ENCODE measurements at regions of chr9 and their contacts with region 1.

Region 1: DNA sequence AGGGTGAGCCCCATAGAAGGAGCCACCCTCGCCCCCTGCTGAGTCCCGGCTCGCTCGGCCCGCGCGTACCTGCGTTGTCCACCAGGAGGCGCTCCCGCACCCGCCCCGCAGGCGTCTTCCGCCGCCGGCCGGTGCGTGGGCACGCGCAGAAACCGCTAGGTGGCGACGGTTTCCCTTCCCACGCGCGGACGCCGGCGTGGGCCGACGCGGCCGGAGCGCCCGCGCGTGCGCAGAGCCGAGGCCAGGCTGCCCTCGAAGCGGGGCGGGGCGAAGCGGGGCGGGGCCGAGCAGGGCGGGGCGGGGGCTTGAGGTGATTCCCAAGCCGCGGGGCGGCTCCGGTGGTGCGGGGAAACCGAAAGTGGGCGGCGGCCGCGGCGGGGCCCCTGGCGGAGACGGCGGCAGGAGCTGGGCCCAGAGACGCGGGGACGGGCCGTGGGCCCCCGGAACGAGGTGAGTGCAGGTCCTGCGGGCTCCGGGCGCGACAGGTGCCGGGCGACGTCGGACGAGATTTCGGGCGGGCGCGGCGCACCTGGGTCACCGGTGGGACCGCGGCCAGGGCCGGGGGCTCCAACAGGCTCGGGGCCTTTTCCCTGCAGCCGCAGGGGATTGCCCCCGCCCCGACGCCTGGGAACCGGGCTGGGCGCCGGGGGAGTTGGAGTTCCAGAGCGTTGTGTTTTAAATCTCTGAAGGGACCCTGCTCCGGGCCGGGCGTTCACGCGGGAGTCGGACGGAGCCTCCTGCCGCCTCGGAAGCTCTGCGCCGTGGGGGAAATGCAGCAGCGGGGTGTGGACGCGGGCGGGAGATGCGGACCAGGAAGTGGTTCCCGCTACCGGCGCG is at the start of gene TDRD7:
- DNase-seq: peak; percentile 94
- ATAC-seq: peak; percentile 90
- H3K4me3 Mint-ChIP-seq: peak within 1 kb of the TSS; percentile 87
- H3K27ac Mint-ChIP-seq: peak within 1 kb of the TSS; percentile 78
- H3K4me1 Mint-ChIP-seq: peaks cover 38% of the 10 kb centered on the region
- H3K27me3 Mint-ChIP-seq: peaks cover 5% of the 10 kb centered on the region
- CTCF ChIP-seq: peak; percentile 43
- total RNA-seq, gene TDRD7: 13.7 and 14.7 TPM in 2 replicates

Region 2: DNA sequence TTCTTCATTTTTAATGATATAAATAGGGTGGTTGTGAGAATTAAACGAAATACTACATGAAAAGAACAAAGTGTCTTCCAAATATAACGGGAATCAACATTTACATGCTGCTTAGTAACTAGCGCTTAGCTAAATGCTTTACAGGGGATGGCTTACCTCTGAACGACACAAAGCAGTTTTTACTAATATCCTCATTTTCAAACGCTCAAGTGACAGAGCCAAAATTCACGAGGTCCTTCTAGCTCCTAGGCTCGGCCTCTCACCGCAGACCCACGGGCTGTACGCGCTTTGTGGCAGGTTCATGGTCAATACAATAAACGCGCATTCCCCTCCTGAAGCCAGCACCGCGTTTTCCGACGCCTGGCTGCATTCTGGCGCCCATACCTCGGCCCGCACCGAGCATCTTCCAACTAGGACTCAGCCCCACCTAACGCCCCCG is 634.6 kb before region 1 on chr9:
- CTCF ChIA-PET with region 1: no interaction called
- POLR2A ChIA-PET with region 1: no interaction called
- intact Hi-C with region 1: loop called (anchors 5 kb)
- DNase-seq: no peak
- ATAC-seq: no peak
- H3K4me3 Mint-ChIP-seq: peak overlapping the region; percentile 99
- H3K27ac Mint-ChIP-seq: peak overlapping the region; percentile 96
- H3K4me1 Mint-ChIP-seq: peaks cover 25% of the 10 kb centered on the region
- H3K27me3 Mint-ChIP-seq: no peaks in the 10 kb centered on the region
- CTCF ChIP-seq: no peak

Region 3: GRCh38 chr9:97237951-97238851 is 173.8 kb before region 1 on chr9:
- CTCF ChIA-PET with region 1: no interaction called
- POLR2A ChIA-PET with region 1: no interaction called
- intact Hi-C with region 1: loop called (anchors 5 kb)
- DNase-seq: peak; percentile 62
- ATAC-seq: peak; percentile 92
- H3K4me3 Mint-ChIP-seq: peak overlapping the region; percentile 95
- H3K27ac Mint-ChIP-seq: peak overlapping the region; percentile 90
- H3K4me1 Mint-ChIP-seq: peaks cover 18% of the 10 kb centered on the region
- H3K27me3 Mint-ChIP-seq: peaks cover 2% of the 10 kb centered on the region
- CTCF ChIP-seq: no peak

Region 4: GRCh38 chr9:97348866-97349265 is 63.1 kb before region 1 on chr9:
- CTCF ChIA-PET with region 1: no interaction called
- POLR2A ChIA-PET with region 1: no interaction called
- intact Hi-C with region 1: no loop called
- DNase-seq: no peak
- ATAC-seq: no peak
- H3K4me3 Mint-ChIP-seq: no peak overlapping the region
- H3K27ac Mint-ChIP-seq: no peak overlapping the region
- H3K4me1 Mint-ChIP-seq: no peaks in the 10 kb centered on the region
- H3K27me3 Mint-ChIP-seq: no peaks in the 10 kb centered on the region
- CTCF ChIP-seq: no peak

Region 5: GRCh38 chr9:97501177-97501971 is 89.4 kb after region 1 on chr9 and contains the start of gene TMOD1:
- CTCF ChIA-PET with region 1: interaction called, 5 read pairs
- POLR2A ChIA-PET with region 1: no interaction called
- intact Hi-C with region 1: loop called (anchors 1 kb)
- DNase-seq: peak; percentile 48
- ATAC-seq: peak; percentile 88
- H3K4me3 Mint-ChIP-seq: peak within 1 kb of the TSS; percentile 77
- H3K27ac Mint-ChIP-seq: no peak within 1 kb of the TSS
- H3K4me1 Mint-ChIP-seq: peaks cover 21% of the 10 kb centered on the region
- H3K27me3 Mint-ChIP-seq: peaks cover 29% of the 10 kb centered on the region
- CTCF ChIP-seq: no peak
- total RNA-seq, gene TMOD1: 1.2 and 1.9 TPM in 2 replicates

Region 6: DNA sequence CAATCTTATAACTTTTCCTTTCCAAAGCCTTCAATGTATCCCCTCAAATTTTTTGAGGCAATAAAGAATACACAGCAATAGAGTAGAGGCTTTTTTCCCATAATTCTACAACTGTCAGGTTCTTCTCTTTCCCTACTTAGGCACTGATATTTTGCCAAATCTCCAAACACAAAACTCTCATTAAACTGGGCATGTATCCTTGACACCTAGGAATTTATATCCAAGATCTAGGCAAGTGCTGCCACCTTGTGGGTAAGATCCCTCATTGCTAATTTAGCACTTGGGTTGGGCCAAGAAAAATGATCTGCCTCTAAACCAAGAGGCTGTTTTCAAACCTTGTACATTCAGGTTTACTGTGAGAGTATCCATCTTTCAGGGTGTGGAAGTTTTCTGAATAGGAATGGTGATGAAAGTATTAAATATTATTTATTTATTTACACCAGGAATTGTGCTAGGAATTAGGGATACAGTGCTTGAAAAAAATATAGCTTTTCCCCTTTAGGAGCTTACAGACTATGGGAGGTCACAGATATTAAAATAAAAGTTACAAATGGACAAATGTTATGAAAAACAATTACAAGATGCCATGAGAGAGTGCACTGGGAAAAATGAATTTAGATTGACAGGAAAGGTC is 203.5 kb after region 1 on chr9:
- CTCF ChIA-PET with region 1: interaction called, 17 read pairs
- POLR2A ChIA-PET with region 1: interaction called, 3 read pairs
- intact Hi-C with region 1: loop called (anchors 1 kb)
- DNase-seq: no peak
- ATAC-seq: peak; percentile 52
- H3K4me3 Mint-ChIP-seq: no peak overlapping the region
- H3K27ac Mint-ChIP-seq: no peak overlapping the region
- H3K4me1 Mint-ChIP-seq: peaks cover 12% of the 10 kb centered on the region
- H3K27me3 Mint-ChIP-seq: no peaks in the 10 kb centered on the region
- CTCF ChIP-seq: peak; percentile 77

Region 7: DNA sequence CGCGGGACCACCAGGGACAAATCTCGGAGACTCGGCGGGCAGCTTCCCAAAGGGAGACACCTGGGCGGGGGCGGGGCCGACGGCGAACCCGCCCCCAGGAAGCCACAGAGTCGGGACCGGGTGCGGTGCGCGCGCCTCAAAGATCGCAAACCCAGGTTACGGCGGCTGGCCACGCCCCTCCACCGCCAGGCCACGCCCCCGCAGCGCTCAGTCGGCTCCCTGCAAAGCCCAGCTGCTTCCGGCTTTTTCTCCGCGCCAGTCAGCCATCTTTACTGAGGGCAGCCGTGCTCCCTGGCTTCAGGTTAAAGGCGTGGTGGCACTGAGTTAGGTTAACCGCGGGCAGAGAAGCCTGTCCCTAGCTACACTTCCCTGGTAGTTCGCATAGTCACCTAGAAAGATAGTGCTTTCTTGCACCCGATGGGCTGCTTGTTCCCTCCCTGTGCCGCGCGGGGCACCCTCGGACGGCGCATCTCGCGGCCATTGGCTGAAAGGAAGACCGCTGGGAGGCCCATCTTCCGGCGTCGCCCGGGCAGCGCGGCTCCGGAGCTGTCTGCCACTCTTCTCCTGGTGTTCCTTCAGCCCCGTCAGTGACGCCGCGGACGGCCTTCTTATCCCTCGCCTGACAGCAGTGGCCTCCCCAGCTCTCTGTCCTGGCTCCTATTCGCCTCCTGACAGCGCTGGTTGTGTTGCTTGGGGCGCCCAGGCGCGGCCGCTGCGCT is 843.7 kb after region 1 on chr9 and contains the start of gene TBC1D2:
- CTCF ChIA-PET with region 1: no interaction called
- POLR2A ChIA-PET with region 1: no interaction called
- intact Hi-C with region 1: loop called (anchors 2 kb)
- DNase-seq: peak; percentile 98
- ATAC-seq: peak; percentile 90
- H3K4me3 Mint-ChIP-seq: peak within 1 kb of the TSS; percentile 98
- H3K27ac Mint-ChIP-seq: peak within 1 kb of the TSS; percentile 99
- H3K4me1 Mint-ChIP-seq: peaks cover 13% of the 10 kb centered on the region
- H3K27me3 Mint-ChIP-seq: no peaks in the 10 kb centered on the region
- CTCF ChIP-seq: no peak
- total RNA-seq, gene TBC1D2: 2.1 and 2.7 TPM in 2 replicates

Measured in activated B cell treated with CpG ODN at 0.5 μM for 24 hours (primary cell).